Activated CD4-positive, alpha-beta memory T cell treated with anti-CD3 and anti-CD28 coated beads for 36 hours (primary cell): ENCODE measurements at regions of chr6 and their contacts with region 1.

Region 1: GRCh38 chr6:30730601-30731435 is 10.7 kb downstream of the TUBB start:
- DNase-seq: peak; percentile 93
- H3K4me3 Mint-ChIP-seq: peak overlapping the region; percentile 10
- H3K27ac Mint-ChIP-seq: peak overlapping the region; percentile 56
- H3K4me1 Mint-ChIP-seq: peaks cover 39% of the 10 kb centered on the region
- H3K27me3 Mint-ChIP-seq: no peaks in the 10 kb centered on the region

Region 2: DNA sequence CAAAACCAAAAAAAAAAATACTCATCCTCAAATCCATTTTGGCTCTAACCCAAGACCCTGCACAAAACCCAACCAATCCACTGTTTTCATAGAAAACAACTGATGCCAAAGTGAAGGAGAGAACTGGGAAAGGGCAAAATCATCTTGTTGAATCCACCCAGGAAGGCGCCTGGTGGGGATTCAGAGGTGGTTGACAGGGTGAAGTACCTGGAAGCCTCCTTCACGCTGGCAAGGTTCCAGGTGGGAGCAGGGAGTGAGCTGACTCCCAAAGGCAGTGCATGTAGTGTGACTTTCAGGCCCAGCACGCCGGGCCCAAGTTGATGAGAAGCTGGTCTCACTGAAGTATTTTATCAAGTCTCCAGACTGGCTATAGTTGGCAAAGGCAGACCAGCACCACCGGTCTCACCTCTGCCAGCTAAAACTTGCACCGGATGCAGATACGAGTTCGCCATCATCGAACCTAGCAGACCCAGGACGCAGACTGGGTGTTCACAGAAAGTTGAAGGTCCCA is 130.3 kb before region 1 on chr6:
- CTCF ChIA-PET with region 1: interaction called, 18 read pairs
- POLR2A ChIA-PET with region 1: no interaction called
- intact Hi-C with region 1: no loop called
- DNase-seq: no peak
- H3K4me3 Mint-ChIP-seq: no peak overlapping the region
- H3K27ac Mint-ChIP-seq: no peak overlapping the region
- H3K4me1 Mint-ChIP-seq: peaks cover 14% of the 10 kb centered on the region
- H3K27me3 Mint-ChIP-seq: no peaks in the 10 kb centered on the region

Region 3: DNA sequence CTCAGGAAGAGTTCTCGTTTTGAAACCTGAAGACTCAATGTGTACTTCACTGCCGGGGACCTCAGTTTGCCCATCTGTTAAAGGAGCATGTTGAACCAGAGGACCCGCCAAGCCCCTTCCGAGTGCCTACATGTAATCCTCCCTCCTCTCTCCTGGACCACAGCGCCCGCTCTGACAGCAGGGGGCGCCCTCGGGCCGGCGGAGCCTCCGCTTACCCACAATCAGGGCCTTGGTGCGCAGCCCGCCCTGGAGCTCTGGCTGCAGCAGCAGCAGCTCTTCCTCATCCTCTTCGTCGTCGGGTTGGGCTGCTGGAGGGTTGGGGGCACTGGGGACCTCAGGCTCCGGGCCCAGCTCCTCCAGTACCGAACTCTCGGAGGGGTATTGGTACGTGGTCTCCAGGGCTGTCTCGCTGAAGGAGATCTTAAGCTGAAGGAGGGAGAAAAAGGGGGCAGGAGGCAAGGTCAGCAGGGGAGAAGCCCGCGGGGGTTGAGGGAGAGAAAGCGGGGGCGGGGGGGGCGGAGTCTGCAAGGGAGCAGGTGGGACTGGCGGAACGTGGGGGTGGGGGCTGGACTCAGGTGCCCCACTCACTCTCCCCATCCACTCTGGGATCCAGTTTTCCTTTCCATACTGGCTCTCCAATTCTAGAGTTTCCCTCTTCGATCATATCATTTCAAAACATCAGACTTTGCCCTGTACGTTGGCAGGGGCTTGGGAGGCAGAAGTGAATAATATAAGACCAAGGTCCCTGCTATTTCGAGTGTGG is 51.7 kb before region 1 on chr6:
- CTCF ChIA-PET with region 1: interaction called, 628 read pairs
- POLR2A ChIA-PET with region 1: interaction called, 209 read pairs
- intact Hi-C with region 1: no loop called
- DNase-seq: peak; percentile 94
- H3K4me3 Mint-ChIP-seq: peak overlapping the region; percentile 100
- H3K27ac Mint-ChIP-seq: peak overlapping the region; percentile 99
- H3K4me1 Mint-ChIP-seq: peaks cover 16% of the 10 kb centered on the region
- H3K27me3 Mint-ChIP-seq: no peaks in the 10 kb centered on the region

Region 4: DNA sequence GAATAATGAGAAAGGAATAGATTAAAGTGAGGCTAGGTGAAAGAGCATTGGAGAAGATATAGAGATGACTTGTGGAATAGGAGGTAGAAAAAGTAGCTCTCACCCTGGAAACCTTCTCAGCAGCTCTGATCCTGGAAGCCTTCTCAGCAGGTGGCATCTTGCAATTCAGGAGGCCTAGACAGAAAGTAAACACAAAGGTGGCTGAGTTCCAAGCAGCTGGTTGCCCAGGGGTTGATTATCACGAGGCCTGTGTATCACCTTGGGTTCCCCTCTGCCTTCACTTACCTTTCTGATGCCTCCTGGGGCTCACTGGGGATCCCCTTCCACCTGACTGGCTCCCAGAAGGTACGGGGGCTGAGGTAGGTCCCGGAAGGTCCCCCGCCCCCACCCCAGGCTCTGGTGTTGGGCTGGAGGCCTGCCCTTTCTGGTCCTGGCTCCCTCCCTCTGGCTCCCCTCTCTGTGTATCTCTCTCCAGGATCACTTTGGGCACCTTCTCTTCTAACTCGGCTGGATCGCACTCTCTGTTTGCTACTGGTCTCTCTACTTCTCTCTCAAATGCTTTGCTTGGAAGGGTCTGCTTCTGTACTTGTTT is 23.4 kb before region 1 on chr6:
- CTCF ChIA-PET with region 1: no interaction called
- POLR2A ChIA-PET with region 1: no interaction called
- intact Hi-C with region 1: no loop called
- DNase-seq: no peak
- H3K4me3 Mint-ChIP-seq: no peak overlapping the region
- H3K27ac Mint-ChIP-seq: no peak overlapping the region
- H3K4me1 Mint-ChIP-seq: peaks cover 8% of the 10 kb centered on the region
- H3K27me3 Mint-ChIP-seq: no peaks in the 10 kb centered on the region

Region 5: GRCh38 chr6:30742316-30743098 is 11.7 kb after region 1 on chr6 and contains the start of gene FLOT1:
- CTCF ChIA-PET with region 1: interaction called, 19 read pairs
- POLR2A ChIA-PET with region 1: interaction called, 19 read pairs
- intact Hi-C with region 1: loop called (anchors 1 kb)
- DNase-seq: peak; percentile 99
- H3K4me3 Mint-ChIP-seq: peak within 1 kb of the TSS; percentile 99
- H3K27ac Mint-ChIP-seq: peak within 1 kb of the TSS; percentile 97
- H3K4me1 Mint-ChIP-seq: peaks cover 62% of the 10 kb centered on the region
- H3K27me3 Mint-ChIP-seq: no peaks in the 10 kb centered on the region
- total RNA-seq, gene FLOT1: 226 to 231 TPM

Region 6: DNA sequence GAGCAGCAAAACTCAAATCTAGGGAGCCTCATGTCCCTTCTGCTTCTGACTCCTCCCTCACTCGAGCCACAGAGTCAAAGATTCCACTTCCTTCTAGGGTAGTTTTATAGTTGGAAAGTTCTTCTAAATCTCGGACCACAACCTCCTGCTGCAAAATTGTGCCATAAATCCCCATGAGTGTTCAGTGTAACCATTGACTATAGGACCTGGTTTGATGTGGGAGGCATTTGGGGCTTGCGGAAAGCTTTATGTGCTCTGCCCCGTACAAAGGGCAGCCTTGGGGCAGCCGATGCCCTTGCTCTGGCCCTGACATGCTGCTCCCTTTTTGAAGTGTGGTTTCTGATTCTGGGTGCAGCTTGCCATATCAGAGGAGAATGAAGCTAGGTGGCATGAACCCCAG is 57.1 kb after region 1 on chr6:
- CTCF ChIA-PET with region 1: interaction called, 6 read pairs
- POLR2A ChIA-PET with region 1: interaction called, 3 read pairs
- intact Hi-C with region 1: loop called (anchors 2 kb)
- DNase-seq: peak; percentile 58
- H3K4me3 Mint-ChIP-seq: peak overlapping the region; percentile 48
- H3K27ac Mint-ChIP-seq: peak overlapping the region; percentile 89
- H3K4me1 Mint-ChIP-seq: peaks cover 61% of the 10 kb centered on the region
- H3K27me3 Mint-ChIP-seq: no peaks in the 10 kb centered on the region

Region 7: GRCh38 chr6:30877419-30878371 is 146.9 kb after region 1 on chr6:
- CTCF ChIA-PET with region 1: interaction called, 9 read pairs
- POLR2A ChIA-PET with region 1: no interaction called
- intact Hi-C with region 1: loop called (anchors 2 kb)
- DNase-seq: peak; percentile 83
- H3K4me3 Mint-ChIP-seq: peak overlapping the region; percentile 62
- H3K27ac Mint-ChIP-seq: peak overlapping the region; percentile 78
- H3K4me1 Mint-ChIP-seq: peaks cover 20% of the 10 kb centered on the region
- H3K27me3 Mint-ChIP-seq: no peaks in the 10 kb centered on the region